Mammary epithelial cell (primary cell): ENCODE measurements at regions of chr10 and their contacts with region 1.

Region 1: GRCh38 chr10:98404571-98405359 is 10.2 kb downstream of the PYROXD2 start:
- DNase-seq: peak; percentile 60
- H3K4me3 ChIP-seq: no peak overlapping the region
- H3K27ac ChIP-seq: peak overlapping the region; percentile 22
- H3K4me1 ChIP-seq: peaks cover 12% of the 10 kb centered on the region
- H3K27me3 ChIP-seq: no peaks in the 10 kb centered on the region
- CTCF ChIP-seq: no peak

Region 2: DNA sequence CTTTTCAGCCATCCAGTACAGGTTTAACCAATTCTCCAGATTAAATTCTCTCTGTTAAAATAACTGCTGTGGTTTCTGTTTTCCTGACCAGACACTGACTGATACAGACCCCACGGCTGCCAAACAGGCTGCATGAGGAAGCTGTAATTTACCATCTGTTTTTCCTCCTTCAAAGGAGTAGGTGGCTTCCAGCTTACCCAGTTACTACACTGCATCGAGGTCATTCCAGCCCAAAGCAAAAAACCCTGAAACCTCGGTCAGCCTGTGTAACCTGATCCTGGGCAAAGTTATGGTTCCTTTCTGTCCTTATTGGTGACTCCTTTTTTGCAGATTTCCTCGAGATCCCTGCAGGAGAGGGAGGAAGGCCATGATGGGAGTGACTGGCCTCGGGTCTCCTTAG is 108.9 kb before region 1 on chr10:
- CTCF ChIA-PET with region 1: no interaction called
- dilution Hi-C with region 1: no loop called
- in situ Hi-C with region 1: no loop called
- intact Hi-C with region 1: no loop called
- DNase-seq: no peak
- H3K4me3 ChIP-seq: no peak overlapping the region
- H3K27ac ChIP-seq: no peak overlapping the region
- H3K4me1 ChIP-seq: peaks cover 43% of the 10 kb centered on the region
- H3K27me3 ChIP-seq: no peaks in the 10 kb centered on the region
- CTCF ChIP-seq: no peak

Region 3: DNA sequence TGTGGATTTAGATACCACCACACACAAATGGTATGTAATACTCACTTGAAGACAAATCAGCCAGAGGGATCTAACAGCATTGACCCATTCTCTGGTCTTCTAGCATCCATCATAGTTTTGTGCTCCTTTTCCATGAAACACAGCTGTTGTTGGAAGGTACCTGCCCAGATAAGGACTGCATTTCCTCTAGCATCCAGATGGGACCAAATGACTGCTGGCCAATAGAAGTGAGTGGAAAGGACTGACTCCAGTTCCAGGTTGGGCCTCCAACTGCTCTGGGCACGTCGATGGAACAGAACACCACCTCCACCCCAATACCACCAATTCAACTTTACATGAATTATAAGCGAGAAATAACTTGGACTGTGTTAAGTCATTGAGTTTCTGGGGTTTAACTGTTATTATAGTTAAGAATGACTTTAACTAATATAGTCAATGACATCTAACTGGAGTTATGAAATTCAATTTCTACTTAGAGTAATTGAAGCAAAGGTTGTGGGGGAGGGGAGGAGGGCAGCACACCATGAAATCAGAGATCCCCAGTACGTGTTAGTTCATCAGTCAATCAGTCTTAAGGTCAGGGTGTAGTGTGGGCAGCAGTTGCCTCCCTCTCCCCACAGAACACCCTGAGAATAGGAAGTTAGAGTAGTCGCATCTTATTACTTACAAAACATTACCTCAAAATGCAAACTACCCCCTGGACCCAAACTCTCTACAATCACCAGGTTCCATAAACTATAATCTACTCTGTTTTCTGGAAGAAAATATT is 48.8 kb after region 1 on chr10:
- CTCF ChIA-PET with region 1: no interaction called
- dilution Hi-C with region 1: loop called (anchors 5 kb)
- in situ Hi-C with region 1: no loop called
- intact Hi-C with region 1: no loop called
- DNase-seq: no peak
- H3K4me3 ChIP-seq: no peak overlapping the region
- H3K27ac ChIP-seq: no peak overlapping the region
- H3K4me1 ChIP-seq: peaks cover 6% of the 10 kb centered on the region
- H3K27me3 ChIP-seq: no peaks in the 10 kb centered on the region
- CTCF ChIP-seq: no peak

Region 4: GRCh38 chr10:98511876-98512275 is 107.1 kb after region 1 on chr10:
- CTCF ChIA-PET with region 1: no interaction called
- dilution Hi-C with region 1: no loop called
- in situ Hi-C with region 1: no loop called
- intact Hi-C with region 1: no loop called
- DNase-seq: no peak
- H3K4me3 ChIP-seq: no peak overlapping the region
- H3K27ac ChIP-seq: no peak overlapping the region
- H3K4me1 ChIP-seq: no peaks in the 10 kb centered on the region
- H3K27me3 ChIP-seq: no peaks in the 10 kb centered on the region
- CTCF ChIP-seq: no peak